Natural killer cell (primary cell): ENCODE measurements at regions of chr3 and their contacts with region 1.

Region 1: DNA sequence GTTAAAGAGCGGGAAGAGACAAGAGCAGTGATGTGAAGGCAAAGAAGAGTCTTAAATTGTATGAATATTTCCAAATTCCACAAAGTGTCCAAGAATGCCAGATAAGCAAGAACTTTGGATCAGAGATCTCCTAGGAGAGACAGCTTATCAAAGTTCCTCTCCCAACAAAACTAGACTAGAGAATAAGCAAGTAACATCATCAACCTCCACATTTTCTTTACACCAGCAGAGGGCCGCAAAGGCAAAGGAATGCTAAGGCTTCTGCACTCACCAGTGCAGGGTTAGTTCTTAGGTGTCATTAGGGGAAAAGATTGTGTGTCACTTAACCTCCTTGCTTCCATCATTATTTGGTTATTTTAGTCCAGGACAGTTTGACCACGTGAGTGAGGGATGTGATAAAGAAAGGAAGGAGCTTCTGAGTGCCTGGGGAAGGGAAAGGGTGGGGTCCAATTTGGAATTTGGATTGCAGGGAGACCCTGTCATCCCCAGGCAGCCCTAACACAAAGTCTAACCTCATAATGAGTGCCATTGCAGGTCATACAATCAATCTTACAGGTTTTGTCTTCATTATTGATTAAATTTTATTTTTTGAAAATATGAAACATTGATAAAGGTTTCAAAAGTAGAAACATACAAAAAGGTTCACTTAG is 7.5 kb upstream of the CMTM6 start:
- DNase-seq: peak; percentile 38 to 81
- ATAC-seq: peak; percentile 91 to 98 (median 92)
- H3K4me3 ChIP-seq: no peak overlapping the region
- H3K4me3 Mint-ChIP-seq: no peak overlapping the region
- H3K27ac ChIP-seq: no peak overlapping the region
- H3K27ac Mint-ChIP-seq: no peak overlapping the region
- H3K4me1 ChIP-seq: no peaks in the 10 kb centered on the region
- H3K4me1 Mint-ChIP-seq: peaks cover 0 to 3% of the 10 kb centered on the region in 2 donors
- H3K27me3 ChIP-seq: no peaks in the 10 kb centered on the region
- H3K27me3 Mint-ChIP-seq: no peaks in the 10 kb centered on the region
- CTCF ChIP-seq: peak; percentile 70

Region 2: GRCh38 chr3:32781210-32781968 is 271.2 kb after region 1 on chr3:
- intact Hi-C with region 1: loop called (anchors 5 kb)
- DNase-seq: peak; percentile 57 to 73
- ATAC-seq: peak; percentile 92 to 95 (median 92)
- H3K4me3 ChIP-seq: peak overlapping the region; percentile 53
- H3K4me3 Mint-ChIP-seq: peak overlapping the region; percentile 91
- H3K27ac ChIP-seq: no peak overlapping the region
- H3K27ac Mint-ChIP-seq: peak overlapping the region; percentile 60 to 86
- H3K4me1 ChIP-seq: peaks cover 10% of the 10 kb centered on the region
- H3K4me1 Mint-ChIP-seq: peaks cover 5 to 18% of the 10 kb centered on the region in 2 donors
- H3K27me3 ChIP-seq: no peaks in the 10 kb centered on the region
- H3K27me3 Mint-ChIP-seq: peaks cover 0 to 8% of the 10 kb centered on the region in 2 donors
- CTCF ChIP-seq: peak; percentile 83

Region 3: GRCh38 chr3:32934150-32934742 is 424.0 kb after region 1 on chr3:
- intact Hi-C with region 1: loop called (anchors 5 kb)
- DNase-seq: peak in 1 of 2 donors; percentile 55
- ATAC-seq: no peak
- H3K4me3 ChIP-seq: no peak overlapping the region
- H3K4me3 Mint-ChIP-seq: no peak overlapping the region
- H3K27ac ChIP-seq: no peak overlapping the region
- H3K27ac Mint-ChIP-seq: no peak overlapping the region
- H3K4me1 ChIP-seq: no peaks in the 10 kb centered on the region
- H3K4me1 Mint-ChIP-seq: no peaks in the 10 kb centered on the region
- H3K27me3 ChIP-seq: no peaks in the 10 kb centered on the region
- H3K27me3 Mint-ChIP-seq: no peaks in the 10 kb centered on the region
- CTCF ChIP-seq: peak; percentile 39

Region 4: GRCh38 chr3:33074217-33075067 is 564.2 kb after region 1 on chr3:
- intact Hi-C with region 1: loop called (anchors 5 kb)
- DNase-seq: peak in 1 of 2 donors; percentile 86
- ATAC-seq: peak; percentile 81 to 85 (median 81)
- H3K4me3 ChIP-seq: no peak overlapping the region
- H3K4me3 Mint-ChIP-seq: no peak overlapping the region
- H3K27ac ChIP-seq: no peak overlapping the region
- H3K27ac Mint-ChIP-seq: no peak overlapping the region
- H3K4me1 ChIP-seq: peaks cover 2% of the 10 kb centered on the region
- H3K4me1 Mint-ChIP-seq: peaks cover 8 to 24% of the 10 kb centered on the region in 2 donors
- H3K27me3 ChIP-seq: no peaks in the 10 kb centered on the region
- H3K27me3 Mint-ChIP-seq: no peaks in the 10 kb centered on the region
- CTCF ChIP-seq: peak; percentile 83